ENCODE measurements at regions of chr1 and their contacts with region 1.

Region 1: GRCh38 chr1:89566298-89566697 is 41.7 kb downstream of the LRRC8B start:
- DNase-seq: no peak
- H3K4me3 ChIP-seq: no peak overlapping the region
- H3K4me3 Mint-ChIP-seq: no peak overlapping the region
- H3K27ac ChIP-seq: peak overlapping the region; percentile 56
- H3K27ac Mint-ChIP-seq: no peak overlapping the region
- H3K4me1 ChIP-seq: peaks cover 4% of the 10 kb centered on the region
- H3K4me1 Mint-ChIP-seq: peaks cover 12 to 44% (median 43%) of the 10 kb centered on the region in 3 donors
- H3K27me3 ChIP-seq: no peaks in the 10 kb centered on the region
- H3K27me3 Mint-ChIP-seq: no peaks in the 10 kb centered on the region

Region 2: GRCh38 chr1:88946861-88947260 is 619.4 kb before region 1 on chr1:
- CTCF ChIA-PET with region 1: no interaction called
- POLR2A ChIA-PET with region 1: interaction called, 10 read pairs
- DNase-seq: no peak
- H3K4me3 ChIP-seq: no peak overlapping the region
- H3K4me3 Mint-ChIP-seq: no peak overlapping the region
- H3K27ac ChIP-seq: no peak overlapping the region
- H3K27ac Mint-ChIP-seq: peak overlapping the region in 4 of 8 donors; percentile 50 to 82 (median 58)
- H3K4me1 ChIP-seq: no peaks in the 10 kb centered on the region
- H3K4me1 Mint-ChIP-seq: no peaks in the 10 kb centered on the region
- H3K27me3 ChIP-seq: no peaks in the 10 kb centered on the region
- H3K27me3 Mint-ChIP-seq: no peaks in the 10 kb centered on the region

Measured in CD8-positive, alpha-beta memory T cell (primary cell).